Posterior vena cava (tissue), 2 donors: ENCODE measurements at regions of chr6 and their contacts with region 1.

Region 1: DNA sequence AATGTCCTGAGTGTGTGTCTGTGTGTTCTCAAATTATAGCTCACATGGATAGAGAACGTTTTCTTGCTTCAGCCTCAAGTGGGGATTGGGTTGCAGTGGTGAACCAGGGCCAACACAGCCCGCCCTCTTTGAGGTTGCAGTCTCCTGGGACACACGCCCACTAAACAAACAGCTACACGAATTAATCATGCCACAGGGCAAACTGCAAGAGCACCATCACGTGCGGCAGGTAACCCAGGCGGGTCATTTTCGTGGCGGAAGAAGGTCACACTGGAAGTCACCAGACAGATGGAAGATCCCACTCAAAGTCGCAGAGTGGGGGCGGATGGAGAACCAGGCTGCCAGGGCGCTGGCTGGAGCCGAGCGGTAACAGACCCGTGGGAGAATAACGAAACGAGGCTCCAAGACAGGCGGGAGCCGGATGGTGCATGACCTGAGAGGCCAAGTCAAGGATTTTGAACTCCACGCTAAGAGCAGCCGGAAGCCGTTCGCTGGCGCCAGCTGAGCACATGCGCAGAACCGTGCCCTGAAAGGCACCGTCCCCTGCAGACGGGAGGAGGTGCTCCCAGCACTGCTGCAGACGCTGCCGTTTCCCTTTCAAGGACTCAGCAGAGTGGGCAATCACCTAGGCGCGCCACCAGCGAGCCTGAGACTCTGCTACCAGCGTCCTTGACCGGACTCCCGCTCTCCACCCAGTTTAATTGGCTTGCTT is 10.7 kb downstream of the DLL1 start:
- DNase-seq: peak; percentile 91

Region 2: DNA sequence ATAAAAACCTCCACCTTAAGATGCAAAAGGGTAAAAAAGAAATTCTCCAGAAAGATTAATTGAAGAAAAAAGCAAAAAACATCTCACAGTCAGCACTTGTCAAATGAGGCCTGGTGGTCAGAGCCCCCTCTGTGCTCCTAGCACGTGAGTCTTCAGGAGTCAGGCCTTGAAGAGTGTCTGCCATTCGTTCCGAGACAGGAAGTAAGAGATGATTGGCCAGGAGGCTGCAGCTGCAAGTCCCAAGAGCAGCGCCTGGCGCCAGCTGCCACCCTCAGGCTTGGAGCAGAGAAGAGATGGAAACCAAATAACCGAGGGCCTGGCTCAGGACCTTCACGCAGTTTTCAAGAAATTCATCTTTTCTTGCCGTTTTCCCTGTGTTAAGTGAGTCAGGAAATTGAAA is 91.5 kb after region 1 on chr6:
- intact Hi-C with region 1: loop called in 1 of 2 experiments (anchors 10 kb)
- DNase-seq: no peak